A549 (cell line): ENCODE measurements at regions of chr22 and their contacts with region 1.

Region 1: GRCh38 chr22:46071451-46072109 is 78.7 kb upstream of the PPARA start:
- DNase-seq: peak in 1 of 2 experiments; percentile 92
- ATAC-seq: peak; percentile 9 to 37; a peak in 4 of 6 replicates
- H3K4me3 ChIP-seq: peak overlapping the region; percentile 73
- H3K27ac ChIP-seq: peak overlapping the region; percentile 99 to 100
- H3K4me1 ChIP-seq: peaks cover 17% of the 10 kb centered on the region
- CTCF ChIP-seq: no peak
- EP300 ChIP-seq: no peak
- POLR2A ChIP-seq: peak; percentile 87
- RAD21 ChIP-seq: no peak

Region 2: GRCh38 chr22:46054091-46055073 is 17.2 kb before region 1 on chr22:
- CTCF ChIA-PET with region 1: no interaction called
- POLR2A ChIA-PET with region 1: interaction called, 39 read pairs
- DNase-seq: no peak
- ATAC-seq: peak; percentile 58 to 71; a peak in 5 of 6 replicates
- H3K4me3 ChIP-seq: peak overlapping the region; percentile 61
- H3K27ac ChIP-seq: peak overlapping the region; percentile 99
- H3K4me1 ChIP-seq: peaks cover 43% of the 10 kb centered on the region
- CTCF ChIP-seq: no peak
- EP300 ChIP-seq: no peak
- POLR2A ChIP-seq: no peak
- RAD21 ChIP-seq: no peak